Heart right ventricle (tissue), 16 donors: ENCODE measurements at regions of chr2 and their contacts with region 1.

Region 1: DNA sequence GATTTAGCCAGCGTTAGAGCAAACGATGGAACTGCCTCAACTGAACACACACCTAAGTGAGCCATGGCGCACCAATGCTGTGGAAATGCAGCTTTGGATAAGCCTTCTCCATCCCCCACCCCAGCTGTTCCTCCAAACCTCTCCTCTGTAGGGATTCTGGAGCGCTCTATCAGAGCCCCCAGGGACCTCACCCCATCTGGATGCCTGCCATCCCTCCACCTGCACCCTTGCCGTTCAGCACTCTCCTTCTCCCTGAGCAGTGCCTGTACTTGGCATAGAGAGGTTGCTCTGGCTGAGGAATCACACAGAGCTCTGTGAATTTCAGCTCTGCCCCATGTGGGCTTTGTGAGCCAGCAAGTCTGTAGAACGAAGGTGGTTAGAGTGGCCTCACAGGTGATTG is 42.8 kb upstream of the INHBB start:
- DNase-seq: no peak
- ATAC-seq: peak in 1 of 8 donors; percentile 9
- H3K4me3 ChIP-seq: no peak overlapping the region
- H3K27ac ChIP-seq: no peak overlapping the region
- H3K4me1 ChIP-seq: peaks cover 0 to 3% (median 0%) of the 10 kb centered on the region in 9 donors
- H3K27me3 ChIP-seq: no peaks in the 10 kb centered on the region
- CTCF ChIP-seq: no peak

Region 2: GRCh38 chr2:120257522-120257921 is 45.7 kb before region 1 on chr2:
- intact Hi-C with region 1: loop called in 1 of 10 experiments (anchors 5 kb)
- DNase-seq: peak in 1 of 2 donors; percentile 35
- ATAC-seq: no peak
- H3K4me3 ChIP-seq: no peak overlapping the region
- H3K27ac ChIP-seq: peak overlapping the region in 2 of 10 donors; percentile 12 to 41
- H3K4me1 ChIP-seq: peaks cover 0 to 80% (median 74%) of the 10 kb centered on the region in 9 donors
- H3K27me3 ChIP-seq: no peaks in the 10 kb centered on the region
- CTCF ChIP-seq: no peak

Region 3: DNA sequence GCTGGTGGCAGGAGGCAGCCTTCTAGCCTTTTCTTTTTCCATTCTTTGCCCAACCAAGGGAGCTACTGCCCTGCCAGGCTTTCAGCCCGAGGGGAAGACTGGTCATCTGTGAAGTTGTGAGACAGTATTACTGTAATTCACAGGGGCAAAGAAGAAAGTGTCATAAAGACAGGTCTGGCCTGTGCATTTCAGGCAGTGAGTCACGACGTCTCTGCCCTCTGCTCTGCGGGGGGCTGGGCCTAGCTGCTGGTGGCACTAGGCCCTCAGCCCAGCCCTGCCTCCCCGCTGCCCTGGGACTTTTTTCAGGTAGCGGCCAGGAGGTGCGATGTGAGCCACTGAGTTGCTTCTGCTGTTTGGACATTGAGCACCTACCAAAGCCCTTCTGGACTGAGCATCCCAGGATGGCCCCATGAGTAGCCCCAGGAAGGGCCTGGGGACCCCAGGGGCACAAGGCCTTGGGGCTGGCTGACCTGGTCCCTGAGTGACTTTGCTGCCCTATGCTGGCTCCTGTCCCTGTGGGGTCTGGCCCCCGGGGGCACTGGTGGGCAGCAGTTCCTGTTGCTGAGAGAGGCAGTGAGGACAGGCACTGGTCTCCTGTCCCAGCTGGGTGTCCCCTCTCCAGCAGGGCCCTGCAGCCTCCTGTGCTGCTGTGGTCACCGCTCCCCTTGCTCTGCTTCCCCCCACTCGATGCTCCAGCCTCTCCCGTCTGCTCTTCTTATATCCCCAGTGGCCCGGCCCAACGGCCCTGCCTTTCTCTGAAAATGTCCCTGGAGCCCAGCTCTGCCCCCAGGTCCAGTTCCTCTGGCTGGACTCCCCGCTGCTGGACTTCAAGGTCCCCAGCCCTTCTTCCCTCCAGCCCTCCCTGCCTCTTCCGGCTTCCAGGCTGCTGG is 49.8 kb after region 1 on chr2:
- intact Hi-C with region 1: no loop called
- DNase-seq: no peak
- ATAC-seq: peak in 1 of 8 donors; percentile 7
- H3K4me3 ChIP-seq: no peak overlapping the region
- H3K27ac ChIP-seq: no peak overlapping the region
- H3K4me1 ChIP-seq: peaks cover 0 to 4% (median 0%) of the 10 kb centered on the region in 9 donors
- H3K27me3 ChIP-seq: peaks cover 0 to 36% (median 18%) of the 10 kb centered on the region in 7 donors
- CTCF ChIP-seq: peak in 1 of 9 donors; percentile 3